Naive thymus-derived CD4-positive, alpha-beta T cell (primary cell): ENCODE measurements at regions of chr6 and their contacts with region 1.

Region 1: DNA sequence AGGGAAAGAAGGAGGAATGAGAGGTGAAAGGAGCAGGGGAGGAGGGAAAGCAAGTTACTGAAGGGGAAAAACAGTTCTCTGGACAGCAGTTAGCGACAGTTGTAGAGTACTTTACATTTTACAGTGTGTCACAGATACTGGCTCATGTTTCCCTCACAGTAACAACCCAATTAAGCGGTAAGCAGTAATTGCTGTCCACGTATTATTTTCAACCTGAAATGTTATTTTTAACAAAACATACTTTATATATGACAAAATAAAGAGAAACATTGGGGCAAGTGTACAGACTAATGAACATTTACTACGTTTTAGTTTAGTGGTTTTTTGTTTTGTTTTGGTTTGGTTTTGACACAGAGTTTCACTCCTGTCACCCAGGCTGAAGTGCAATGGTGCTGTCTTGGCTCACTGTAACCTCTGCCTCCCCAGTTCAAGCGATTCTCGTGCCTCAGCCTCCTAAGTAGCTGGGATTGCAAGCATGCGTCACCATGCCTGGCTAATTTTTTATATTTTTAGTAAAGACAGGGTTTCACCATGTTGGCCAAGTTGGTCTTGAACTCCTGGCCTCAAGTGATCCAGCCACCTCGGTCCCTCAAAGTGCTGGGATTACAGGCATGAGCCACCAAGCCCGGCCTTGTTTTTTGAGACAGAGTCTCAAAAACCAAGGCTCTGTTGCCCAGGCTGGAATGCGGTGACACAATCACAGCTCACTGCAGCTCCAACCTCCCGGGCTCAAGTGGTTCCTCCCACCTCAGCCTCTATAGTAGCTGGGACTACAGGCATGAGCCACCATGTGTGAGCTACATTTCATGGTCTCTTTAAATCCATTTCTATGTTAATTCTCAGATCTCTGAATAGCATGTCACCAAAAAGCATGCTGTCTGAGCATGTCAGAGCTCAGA is 22.6 kb upstream of the BTN3A2 start:
- DNase-seq: no peak
- ATAC-seq: peak; percentile 4
- H3K4me3 ChIP-seq: peak overlapping the region; percentile 38
- H3K4me3 Mint-ChIP-seq: peak overlapping the region; percentile 55 to 91 (median 70)
- H3K27ac ChIP-seq: no peak overlapping the region
- H3K27ac Mint-ChIP-seq: peak overlapping the region in 2 of 9 donors; percentile 8 to 70
- H3K4me1 ChIP-seq: peaks cover 0 to 3% of the 10 kb centered on the region in 2 donors
- H3K4me1 Mint-ChIP-seq: peaks cover 0 to 22% (median 8%) of the 10 kb centered on the region in 7 donors
- H3K27me3 ChIP-seq: no peaks in the 10 kb centered on the region
- H3K27me3 Mint-ChIP-seq: peaks cover 0 to 18% (median 0%) of the 10 kb centered on the region in 5 donors

Region 2: GRCh38 chr6:26363882-26364701 is 21.7 kb after region 1 on chr6:
- CTCF ChIA-PET with region 1: no interaction called
- POLR2A ChIA-PET with region 1: interaction called, 4 read pairs
- intact Hi-C with region 1: loop called (anchors 2 kb)
- DNase-seq: peak in 7 of 9 donors; percentile 22 to 51 (median 45)
- ATAC-seq: peak; percentile 24
- H3K4me3 ChIP-seq: peak overlapping the region; percentile 89
- H3K4me3 Mint-ChIP-seq: no peak overlapping the region
- H3K27ac ChIP-seq: peak overlapping the region; percentile 92
- H3K27ac Mint-ChIP-seq: no peak overlapping the region
- H3K4me1 ChIP-seq: peaks cover 32 to 37% of the 10 kb centered on the region in 2 donors
- H3K4me1 Mint-ChIP-seq: peaks cover 43 to 67% (median 56%) of the 10 kb centered on the region in 7 donors
- H3K27me3 ChIP-seq: no peaks in the 10 kb centered on the region
- H3K27me3 Mint-ChIP-seq: no peaks in the 10 kb centered on the region

Region 3: DNA sequence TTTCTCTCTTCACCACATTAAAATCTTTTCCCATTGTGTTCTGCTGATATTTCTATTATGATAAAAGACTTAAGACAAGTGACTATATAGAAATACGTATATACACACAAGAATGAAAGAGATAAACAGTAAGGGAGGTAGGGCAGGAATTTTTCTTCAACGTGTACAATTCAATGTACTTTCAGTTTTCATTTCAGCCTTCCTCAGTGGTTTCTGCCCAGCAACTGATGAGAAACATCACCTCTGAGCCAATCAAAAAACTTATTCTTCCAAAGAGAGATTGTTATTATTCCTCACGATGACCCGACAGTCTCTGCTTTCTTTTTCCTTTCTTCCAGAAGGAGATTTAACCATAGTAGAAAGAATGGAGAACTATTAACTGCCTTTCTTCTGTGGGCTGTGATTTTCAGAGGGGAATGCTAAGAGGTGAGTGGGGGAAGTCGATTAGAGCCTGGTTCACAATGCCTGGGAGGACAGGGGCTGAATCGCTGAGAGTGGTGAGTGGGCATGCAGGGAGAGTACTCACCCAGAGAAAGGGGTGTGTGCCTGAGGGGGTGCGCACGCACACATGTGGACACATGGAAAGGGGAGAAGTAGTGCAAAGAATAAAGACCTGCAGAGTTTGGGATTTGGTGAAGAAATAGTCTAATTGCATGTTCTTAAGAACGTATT is 59.8 kb after region 1 on chr6 and contains the start of gene BTN3A1:
- CTCF ChIA-PET with region 1: no interaction called
- POLR2A ChIA-PET with region 1: interaction called, 4 read pairs
- intact Hi-C with region 1: loop called (anchors 2 kb)
- DNase-seq: peak in 8 of 9 donors; percentile 65 to 85 (median 78)
- ATAC-seq: peak; percentile 93
- H3K4me3 ChIP-seq: peak within 1 kb of the TSS; percentile 95
- H3K4me3 Mint-ChIP-seq: peak within 1 kb of the TSS; percentile 94 to 100 (median 100)
- H3K27ac ChIP-seq: peak within 1 kb of the TSS; percentile 96
- H3K27ac Mint-ChIP-seq: peak within 1 kb of the TSS; percentile 97 to 100 (median 99)
- H3K4me1 ChIP-seq: peaks cover 35 to 37% of the 10 kb centered on the region in 2 donors
- H3K4me1 Mint-ChIP-seq: peaks cover 37 to 58% (median 53%) of the 10 kb centered on the region in 7 donors
- H3K27me3 ChIP-seq: no peaks in the 10 kb centered on the region
- H3K27me3 Mint-ChIP-seq: no peaks in the 10 kb centered on the region
- total RNA-seq, gene BTN3A1: 122 to 242 (median 235) TPM

Region 4: DNA sequence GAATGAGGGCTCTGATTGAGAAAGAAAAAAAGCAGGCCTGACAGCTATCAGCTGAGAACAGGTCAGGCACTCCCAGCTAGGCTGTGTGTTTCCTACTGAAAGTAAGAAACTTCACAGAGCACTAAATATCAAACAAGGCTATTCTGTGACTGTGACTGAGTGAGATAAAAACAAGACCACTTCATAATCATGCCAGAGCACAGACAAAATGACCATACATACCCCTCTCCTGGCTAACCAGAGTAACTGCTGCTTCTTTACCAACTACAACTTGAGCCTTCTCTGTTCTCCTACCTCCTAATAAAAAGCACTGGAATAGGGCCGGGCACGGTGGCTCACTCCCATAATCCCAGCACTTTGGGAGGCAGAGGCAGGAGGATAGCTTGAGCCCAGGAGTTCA is 150.9 kb after region 1 on chr6:
- CTCF ChIA-PET with region 1: no interaction called
- POLR2A ChIA-PET with region 1: no interaction called
- intact Hi-C with region 1: loop called (anchors 1 kb)
- DNase-seq: peak in 3 of 9 donors; percentile 10 to 23 (median 22)
- ATAC-seq: peak; percentile 58
- H3K4me3 ChIP-seq: no peak overlapping the region
- H3K4me3 Mint-ChIP-seq: no peak overlapping the region
- H3K27ac ChIP-seq: no peak overlapping the region
- H3K27ac Mint-ChIP-seq: no peak overlapping the region
- H3K4me1 ChIP-seq: no peaks in the 10 kb centered on the region
- H3K4me1 Mint-ChIP-seq: peaks cover 0 to 19% (median 4%) of the 10 kb centered on the region in 7 donors
- H3K27me3 ChIP-seq: no peaks in the 10 kb centered on the region
- H3K27me3 Mint-ChIP-seq: peaks cover 0 to 5% (median 0%) of the 10 kb centered on the region in 5 donors

Region 5: DNA sequence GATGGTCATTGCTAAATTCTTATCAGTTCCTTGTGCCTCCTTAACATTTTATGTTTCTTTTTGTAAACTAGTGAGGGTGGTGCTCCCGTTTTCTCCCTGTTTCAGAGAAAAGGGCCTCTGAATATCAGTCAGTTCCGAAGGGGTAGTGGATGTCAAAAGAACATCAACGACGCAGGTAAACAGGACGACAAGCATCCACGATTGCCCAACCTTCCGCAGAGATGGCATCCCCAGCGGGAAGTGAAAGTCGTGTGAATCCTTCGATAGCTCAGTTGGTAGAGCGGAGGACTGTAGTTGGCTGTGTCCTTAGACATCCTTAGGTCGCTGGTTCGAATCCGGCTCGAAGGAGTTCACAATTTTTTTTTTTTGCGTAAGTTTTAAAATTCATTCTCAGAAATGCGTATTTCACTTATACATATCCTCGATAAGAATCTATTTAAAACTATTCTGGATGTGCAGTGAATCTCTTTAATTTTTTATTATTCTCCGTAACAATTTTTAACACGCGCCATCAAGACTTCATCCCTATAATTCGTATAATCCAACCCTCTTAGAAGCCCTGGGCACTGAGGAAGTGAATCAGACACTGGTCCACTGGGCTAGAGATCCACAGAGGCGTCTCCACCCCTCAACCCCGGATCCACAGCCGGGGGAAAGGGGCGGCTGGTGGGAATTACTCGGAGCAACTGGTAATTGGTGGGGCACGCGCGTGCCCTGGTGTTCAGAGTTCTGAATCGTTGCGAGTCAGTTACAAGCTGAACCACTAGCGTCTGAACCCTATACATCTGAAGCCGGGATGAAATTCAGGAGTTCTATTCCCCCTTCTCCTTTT is 226.5 kb after region 1 on chr6:
- CTCF ChIA-PET with region 1: interaction called, 32 read pairs
- POLR2A ChIA-PET with region 1: interaction called, 4 read pairs
- intact Hi-C with region 1: loop called (anchors 1 kb)
- DNase-seq: peak; percentile 96 to 99 (median 98)
- ATAC-seq: peak; percentile 84
- H3K4me3 ChIP-seq: peak overlapping the region; percentile 90
- H3K4me3 Mint-ChIP-seq: peak overlapping the region; percentile 90 to 100 (median 95)
- H3K27ac ChIP-seq: peak overlapping the region; percentile 74
- H3K27ac Mint-ChIP-seq: peak overlapping the region; percentile 96 to 100 (median 99)
- H3K4me1 ChIP-seq: peaks cover 0 to 3% of the 10 kb centered on the region in 2 donors
- H3K4me1 Mint-ChIP-seq: peaks cover 11 to 42% (median 26%) of the 10 kb centered on the region in 7 donors
- H3K27me3 ChIP-seq: no peaks in the 10 kb centered on the region
- H3K27me3 Mint-ChIP-seq: peaks cover 0 to 12% (median 0%) of the 10 kb centered on the region in 5 donors

Region 6: GRCh38 chr6:27078734-27079357 is 736.5 kb after region 1 on chr6:
- CTCF ChIA-PET with region 1: no interaction called
- POLR2A ChIA-PET with region 1: no interaction called
- intact Hi-C with region 1: loop called in 1 of 2 experiments (anchors 1 kb)
- DNase-seq: peak in 7 of 9 donors; percentile 23 to 57 (median 39)
- ATAC-seq: peak; percentile 70
- H3K4me3 ChIP-seq: peak overlapping the region; percentile 45
- H3K4me3 Mint-ChIP-seq: peak overlapping the region; percentile 16 to 88 (median 74)
- H3K27ac ChIP-seq: no peak overlapping the region
- H3K27ac Mint-ChIP-seq: no peak overlapping the region
- H3K4me1 ChIP-seq: no peaks in the 10 kb centered on the region
- H3K4me1 Mint-ChIP-seq: peaks cover 0 to 8% (median 7%) of the 10 kb centered on the region in 7 donors
- H3K27me3 ChIP-seq: peaks cover 0 to 7% of the 10 kb centered on the region in 2 donors
- H3K27me3 Mint-ChIP-seq: peaks cover 34 to 71% (median 56%) of the 10 kb centered on the region in 5 donors